Esophagus muscularis mucosa (tissue), 4 donors: ENCODE measurements at regions of chr18 and their contacts with region 1.

Region 1: DNA sequence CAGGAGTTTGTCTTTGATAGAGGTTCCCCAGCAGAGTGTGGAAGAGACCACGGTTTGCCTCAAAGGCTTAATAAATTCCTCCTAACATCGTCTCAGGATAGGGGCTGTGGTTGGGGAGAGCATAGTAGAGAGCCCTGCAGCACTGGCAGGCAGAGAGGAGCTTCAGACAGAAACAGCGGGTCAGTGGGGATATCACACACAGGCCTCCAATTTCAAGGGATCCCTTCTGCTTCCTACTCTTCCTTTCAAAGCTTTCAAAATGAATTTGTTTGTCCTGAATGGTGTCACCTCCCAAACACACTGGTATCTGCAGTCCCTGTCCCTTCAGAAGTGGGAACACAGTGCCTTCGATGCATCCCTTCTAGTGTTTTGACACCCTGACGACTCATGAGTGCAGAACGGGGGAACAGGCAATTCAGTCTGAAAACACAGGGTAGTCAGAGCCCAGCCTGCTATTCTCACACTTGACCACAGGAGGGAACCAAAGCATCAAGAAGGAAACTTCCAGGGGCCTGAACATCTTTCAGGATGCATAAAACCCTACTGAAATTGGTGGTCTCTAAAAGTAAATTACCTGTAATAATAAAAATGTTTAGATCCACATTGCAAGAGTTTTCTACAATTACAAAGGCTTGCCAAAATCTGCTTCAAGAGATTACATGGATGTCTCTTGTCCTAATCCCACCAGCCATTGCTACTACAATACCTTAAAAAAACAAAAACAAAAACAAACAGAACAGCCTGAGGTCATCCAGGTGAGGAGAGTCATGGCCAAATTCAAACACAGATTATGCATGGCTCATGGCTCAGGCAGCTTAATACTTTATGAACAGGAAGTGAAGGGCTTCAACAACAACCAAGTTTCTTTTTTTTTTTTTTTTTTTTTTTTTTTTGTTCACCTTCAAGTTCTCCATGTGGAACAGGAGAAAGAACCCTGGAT is 49.8 kb downstream of the SLC14A2 start:
- DNase-seq: no peak
- H3K4me3 ChIP-seq: no peak overlapping the region
- H3K27ac ChIP-seq: no peak overlapping the region
- H3K4me1 ChIP-seq: peaks cover 12 to 42% (median 27%) of the 10 kb centered on the region in 4 donors
- H3K27me3 ChIP-seq: no peaks in the 10 kb centered on the region
- CTCF ChIP-seq: peak; percentile 93 to 98 (median 97)
- EP300 ChIP-seq: no peak
- POLR2A ChIP-seq: no peak

Region 2: GRCh38 chr18:44709307-44710126 is 955.6 kb before region 1 on chr18:
- intact Hi-C with region 1: no loop called
- DNase-seq: no peak
- H3K4me3 ChIP-seq: peak overlapping the region in 1 of 4 donors; percentile 2
- H3K27ac ChIP-seq: peak overlapping the region; percentile 67 to 78 (median 74)
- H3K4me1 ChIP-seq: peaks cover 17 to 69% (median 64%) of the 10 kb centered on the region in 4 donors
- H3K27me3 ChIP-seq: no peaks in the 10 kb centered on the region
- CTCF ChIP-seq: no peak
- EP300 ChIP-seq: no peak
- POLR2A ChIP-seq: no peak

Region 3: GRCh38 chr18:45621061-45621511 is 44.0 kb before region 1 on chr18:
- intact Hi-C with region 1: loop called (anchors 5 kb)
- DNase-seq: no peak
- H3K4me3 ChIP-seq: no peak overlapping the region
- H3K27ac ChIP-seq: no peak overlapping the region
- H3K4me1 ChIP-seq: peaks cover 11 to 65% (median 48%) of the 10 kb centered on the region in 4 donors
- H3K27me3 ChIP-seq: no peaks in the 10 kb centered on the region
- CTCF ChIP-seq: peak in 2 of 3 experiments; percentile 94 to 95
- EP300 ChIP-seq: no peak
- POLR2A ChIP-seq: no peak

Region 4: GRCh38 chr18:45863469-45863868 is 198.4 kb after region 1 on chr18:
- intact Hi-C with region 1: no loop called
- DNase-seq: no peak
- H3K4me3 ChIP-seq: no peak overlapping the region
- H3K27ac ChIP-seq: no peak overlapping the region
- H3K4me1 ChIP-seq: no peaks in the 10 kb centered on the region
- H3K27me3 ChIP-seq: no peaks in the 10 kb centered on the region
- CTCF ChIP-seq: no peak
- EP300 ChIP-seq: no peak
- POLR2A ChIP-seq: no peak

Region 5: GRCh38 chr18:45879681-45880655 is 214.9 kb after region 1 on chr18:
- intact Hi-C with region 1: loop called (anchors 5 kb)
- DNase-seq: no peak
- H3K4me3 ChIP-seq: no peak overlapping the region
- H3K27ac ChIP-seq: no peak overlapping the region
- H3K4me1 ChIP-seq: peaks cover 0 to 10% (median 7%) of the 10 kb centered on the region in 4 donors
- H3K27me3 ChIP-seq: no peaks in the 10 kb centered on the region
- CTCF ChIP-seq: peak in 2 of 3 experiments; percentile 96 to 98
- EP300 ChIP-seq: no peak
- POLR2A ChIP-seq: no peak

Region 6: DNA sequence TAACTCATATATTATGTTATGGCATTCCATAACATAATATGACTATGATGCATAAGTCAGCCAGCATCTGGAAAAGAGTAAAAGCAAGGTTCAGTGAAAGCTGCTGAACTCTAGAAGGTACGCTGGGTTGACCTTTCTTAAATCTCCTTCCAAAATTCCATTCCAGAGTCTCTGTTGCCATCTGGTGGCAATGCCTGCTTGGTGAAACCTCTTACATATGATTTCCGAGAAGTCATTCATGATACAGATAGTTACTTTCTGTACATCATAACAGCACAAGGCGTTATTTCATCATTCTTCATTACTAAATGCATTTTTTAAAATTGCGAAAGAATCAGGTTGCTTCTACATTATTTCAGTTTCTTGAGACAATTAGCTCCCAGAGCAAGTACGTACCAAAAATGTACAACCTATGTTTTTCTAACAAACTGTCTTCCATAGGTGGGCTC is 309.0 kb after region 1 on chr18:
- intact Hi-C with region 1: loop called (anchors 10 kb)
- DNase-seq: no peak
- H3K4me3 ChIP-seq: no peak overlapping the region
- H3K27ac ChIP-seq: no peak overlapping the region
- H3K4me1 ChIP-seq: peaks cover 0 to 9% (median 0%) of the 10 kb centered on the region in 4 donors
- H3K27me3 ChIP-seq: no peaks in the 10 kb centered on the region
- CTCF ChIP-seq: peak; percentile 68 to 77 (median 69)
- EP300 ChIP-seq: no peak
- POLR2A ChIP-seq: no peak

Region 7: GRCh38 chr18:46073474-46074331 is 408.6 kb after region 1 on chr18:
- intact Hi-C with region 1: loop called (anchors 10 kb)
- DNase-seq: peak; percentile 93
- H3K4me3 ChIP-seq: no peak overlapping the region
- H3K27ac ChIP-seq: no peak overlapping the region
- H3K4me1 ChIP-seq: peaks cover 14 to 41% (median 34%) of the 10 kb centered on the region in 4 donors
- H3K27me3 ChIP-seq: no peaks in the 10 kb centered on the region
- CTCF ChIP-seq: peak; percentile 65 to 72 (median 70)
- EP300 ChIP-seq: no peak
- POLR2A ChIP-seq: no peak